OCI-LY7 (cell line): ENCODE measurements at regions of chr2 and their contacts with region 1.

Region 1: DNA sequence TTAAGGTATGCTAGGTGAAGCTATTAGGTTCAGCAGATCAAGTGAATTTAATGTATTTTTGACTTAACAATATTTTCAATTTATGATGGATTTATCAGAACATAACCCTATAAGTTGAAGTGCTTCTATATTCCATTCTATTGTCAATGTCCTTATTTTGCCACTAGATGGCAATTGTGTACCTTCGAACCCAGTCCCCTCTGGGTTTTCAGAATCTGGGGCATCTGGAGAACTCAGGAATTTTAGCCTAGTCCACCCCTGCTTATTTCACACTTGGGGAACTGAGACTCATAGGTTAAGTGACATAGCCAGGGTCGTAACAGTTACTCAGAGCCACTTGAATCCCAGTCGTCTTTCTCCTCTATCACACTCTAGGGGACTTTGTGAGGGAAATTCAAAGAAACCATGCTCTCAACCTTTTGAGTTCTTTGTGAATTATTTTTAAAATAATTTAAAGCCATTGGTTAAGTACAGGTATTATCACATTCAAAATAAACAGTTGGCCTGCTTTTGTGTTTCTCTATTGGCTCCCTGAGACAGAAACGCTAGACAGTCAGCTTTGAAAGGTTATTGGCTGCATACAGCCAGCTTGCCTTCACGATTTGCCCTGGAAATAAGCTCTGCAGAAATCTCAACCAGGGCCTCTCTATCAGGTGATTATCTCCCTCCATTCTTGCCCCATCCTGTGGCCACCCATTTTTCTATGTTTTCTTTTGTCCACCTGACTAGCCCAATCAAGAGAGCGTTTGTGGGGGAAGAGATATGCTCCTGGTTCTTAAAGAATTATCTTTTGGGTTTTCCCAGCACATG is 145.0 kb downstream of the TTC27 start:
- DNase-seq: peak; percentile 71
- H3K4me3 ChIP-seq: no peak overlapping the region
- H3K27ac ChIP-seq: peak overlapping the region; percentile 20
- H3K4me1 ChIP-seq: peaks cover 14% of the 10 kb centered on the region
- CTCF ChIP-seq: peak; percentile 99

Region 2: GRCh38 chr2:31987464-31988220 is 785.2 kb before region 1 on chr2:
- CTCF ChIA-PET with region 1: no interaction called
- POLR2A ChIA-PET with region 1: no interaction called
- intact Hi-C with region 1: no loop called
- DNase-seq: no peak
- H3K4me3 ChIP-seq: no peak overlapping the region
- H3K27ac ChIP-seq: no peak overlapping the region
- H3K4me1 ChIP-seq: no peaks in the 10 kb centered on the region
- CTCF ChIP-seq: no peak

Region 3: GRCh38 chr2:32553829-32554432 is 218.9 kb before region 1 on chr2:
- CTCF ChIA-PET with region 1: no interaction called
- POLR2A ChIA-PET with region 1: no interaction called
- intact Hi-C with region 1: loop called (anchors 10 kb)
- DNase-seq: peak; percentile 69
- H3K4me3 ChIP-seq: no peak overlapping the region
- H3K27ac ChIP-seq: no peak overlapping the region
- H3K4me1 ChIP-seq: peaks cover 5% of the 10 kb centered on the region
- CTCF ChIP-seq: peak; percentile 95

Region 4: GRCh38 chr2:33033606-33034081 is 260.8 kb after region 1 on chr2:
- CTCF ChIA-PET with region 1: no interaction called
- POLR2A ChIA-PET with region 1: interaction called, 3 read pairs
- intact Hi-C with region 1: loop called (anchors 1 kb)
- DNase-seq: peak; percentile 69
- H3K4me3 ChIP-seq: no peak overlapping the region
- H3K27ac ChIP-seq: no peak overlapping the region
- H3K4me1 ChIP-seq: peaks cover 26% of the 10 kb centered on the region
- CTCF ChIP-seq: peak; percentile 87

Region 5: GRCh38 chr2:33086400-33087015 is 313.7 kb after region 1 on chr2:
- CTCF ChIA-PET with region 1: interaction called, 6 read pairs
- POLR2A ChIA-PET with region 1: interaction called, 4 read pairs
- intact Hi-C with region 1: loop called (anchors 2 kb)
- DNase-seq: peak; percentile 81
- H3K4me3 ChIP-seq: peak overlapping the region; percentile 34
- H3K27ac ChIP-seq: peak overlapping the region; percentile 95
- H3K4me1 ChIP-seq: peaks cover 60% of the 10 kb centered on the region
- CTCF ChIP-seq: peak; percentile 60

Region 6: GRCh38 chr2:33372940-33373553 is 600.2 kb after region 1 on chr2:
- CTCF ChIA-PET with region 1: no interaction called
- POLR2A ChIA-PET with region 1: interaction called, 3 read pairs
- intact Hi-C with region 1: loop called (anchors 1 kb)
- DNase-seq: peak; percentile 63
- H3K4me3 ChIP-seq: no peak overlapping the region
- H3K27ac ChIP-seq: no peak overlapping the region
- H3K4me1 ChIP-seq: no peaks in the 10 kb centered on the region
- CTCF ChIP-seq: peak; percentile 96

Region 7: DNA sequence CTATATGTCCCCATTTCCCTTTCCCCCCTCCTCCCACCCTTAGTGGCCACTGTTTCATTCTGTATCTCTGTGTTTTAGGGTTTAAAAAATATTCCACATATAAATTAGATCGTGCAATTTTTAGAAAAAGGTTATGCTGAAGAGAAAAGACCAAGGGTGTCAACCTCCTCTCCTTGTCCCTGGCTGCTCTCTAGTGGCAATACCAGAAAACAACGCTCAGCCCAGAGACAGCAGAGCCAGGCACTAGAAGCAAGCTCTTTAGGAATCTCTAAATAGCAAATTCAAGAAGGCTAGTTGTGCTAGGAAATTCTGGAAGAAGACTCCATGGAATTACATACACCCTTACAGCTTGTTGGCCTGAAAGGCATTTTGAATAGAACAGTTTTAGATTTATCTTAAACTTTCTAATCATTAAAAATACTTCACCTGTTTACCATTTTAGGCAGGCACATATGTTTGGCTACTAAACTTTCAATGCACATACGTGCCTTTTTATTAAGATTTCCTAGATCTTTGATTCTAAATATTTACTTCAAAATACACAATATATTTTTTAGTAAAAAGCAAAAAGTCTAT is 668.5 kb after region 1 on chr2:
- CTCF ChIA-PET with region 1: no interaction called
- POLR2A ChIA-PET with region 1: no interaction called
- intact Hi-C with region 1: loop called (anchors 2 kb)
- DNase-seq: peak; percentile 63
- H3K4me3 ChIP-seq: no peak overlapping the region
- H3K27ac ChIP-seq: no peak overlapping the region
- H3K4me1 ChIP-seq: no peaks in the 10 kb centered on the region
- CTCF ChIP-seq: peak; percentile 96

Region 8: GRCh38 chr2:33583194-33583938 is 810.5 kb after region 1 on chr2:
- CTCF ChIA-PET with region 1: no interaction called
- POLR2A ChIA-PET with region 1: no interaction called
- intact Hi-C with region 1: loop called (anchors 5 kb)
- DNase-seq: peak; percentile 53
- H3K4me3 ChIP-seq: no peak overlapping the region
- H3K27ac ChIP-seq: no peak overlapping the region
- H3K4me1 ChIP-seq: peaks cover 3% of the 10 kb centered on the region
- CTCF ChIP-seq: peak; percentile 99